HepG2 (cell line): ENCODE measurements at regions of chr7 and their contacts with region 1.

Region 1: DNA sequence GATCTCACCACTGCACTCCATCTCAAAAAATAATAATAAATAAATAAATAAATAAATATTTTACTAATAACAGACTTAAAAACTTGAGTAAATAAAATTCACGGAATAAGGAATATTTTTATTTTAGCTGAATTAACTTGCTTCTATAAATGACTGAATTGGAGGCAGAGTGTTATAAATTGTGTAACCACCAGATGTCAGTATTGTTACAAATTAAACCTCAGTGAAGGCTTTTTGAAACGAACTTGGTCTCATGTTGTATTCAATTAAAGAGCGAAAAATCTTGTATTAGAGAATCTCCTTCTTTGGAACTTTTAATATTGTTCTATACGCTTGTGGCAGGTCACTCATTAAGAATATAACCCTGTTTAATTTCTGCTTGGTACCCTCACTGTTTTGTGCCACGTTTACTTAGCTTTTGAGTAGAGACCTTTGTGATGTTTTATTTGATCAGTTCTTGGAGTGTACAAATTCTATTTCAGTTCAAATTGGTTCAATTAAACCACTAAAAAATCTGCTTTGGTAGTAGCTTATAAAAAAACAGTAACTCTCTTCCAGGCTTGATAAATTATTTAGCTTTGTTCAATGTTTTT is 45.6 kb upstream of the SCIN start:
- DNase-seq: peak; percentile 33
- ATAC-seq: no peak
- H3K4me3 ChIP-seq: no peak overlapping the region
- H3K27ac ChIP-seq: no peak overlapping the region
- H3K4me1 ChIP-seq: no peaks in the 10 kb centered on the region
- H3K27me3 ChIP-seq: no peaks in the 10 kb centered on the region
- CTCF ChIP-seq: peak; percentile 62
- EP300 ChIP-seq: no peak
- POLR2A ChIP-seq: no peak
- RAD21 ChIP-seq: no peak

Region 2: DNA sequence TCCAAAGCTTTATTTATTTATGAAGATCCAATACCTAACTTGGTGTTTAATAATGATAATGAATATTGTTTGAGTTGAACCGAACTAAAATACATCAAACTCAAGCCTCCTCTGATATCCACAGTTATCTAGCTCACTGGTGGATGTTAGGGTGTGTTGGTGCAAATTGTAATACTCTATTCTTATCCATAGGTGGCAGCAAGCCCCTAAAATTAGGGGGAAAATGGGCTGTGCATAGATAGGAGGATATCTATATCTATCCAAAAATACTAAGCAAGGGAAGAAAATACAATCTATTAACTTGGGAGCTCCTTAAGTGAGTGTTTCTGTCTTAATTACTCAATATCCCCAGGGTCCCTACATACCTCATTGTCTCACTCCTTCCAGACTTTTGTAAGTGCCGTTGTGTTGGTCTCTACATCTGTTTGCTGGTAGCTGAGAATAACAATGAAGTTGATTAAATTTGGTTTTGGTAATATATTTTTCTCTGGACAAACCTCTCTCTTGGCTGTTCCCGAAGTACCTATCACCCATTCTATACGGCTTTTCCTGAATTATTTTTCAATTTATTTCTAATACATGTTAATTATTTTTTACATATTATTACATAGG is 66.3 kb before region 1 on chr7:
- CTCF ChIA-PET with region 1: no interaction called
- POLR2A ChIA-PET with region 1: no interaction called
- in situ Hi-C with region 1: no loop called
- intact Hi-C with region 1: no loop called
- DNase-seq: peak; percentile 28
- ATAC-seq: peak; percentile 95
- H3K4me3 ChIP-seq: no peak overlapping the region
- H3K27ac ChIP-seq: no peak overlapping the region
- H3K4me1 ChIP-seq: no peaks in the 10 kb centered on the region
- H3K27me3 ChIP-seq: no peaks in the 10 kb centered on the region
- CTCF ChIP-seq: peak; percentile 70
- EP300 ChIP-seq: no peak
- POLR2A ChIP-seq: no peak
- RAD21 ChIP-seq: 0 out of 2 replicates have a peak, but pooled peaks have one; percentile 21

Region 3: DNA sequence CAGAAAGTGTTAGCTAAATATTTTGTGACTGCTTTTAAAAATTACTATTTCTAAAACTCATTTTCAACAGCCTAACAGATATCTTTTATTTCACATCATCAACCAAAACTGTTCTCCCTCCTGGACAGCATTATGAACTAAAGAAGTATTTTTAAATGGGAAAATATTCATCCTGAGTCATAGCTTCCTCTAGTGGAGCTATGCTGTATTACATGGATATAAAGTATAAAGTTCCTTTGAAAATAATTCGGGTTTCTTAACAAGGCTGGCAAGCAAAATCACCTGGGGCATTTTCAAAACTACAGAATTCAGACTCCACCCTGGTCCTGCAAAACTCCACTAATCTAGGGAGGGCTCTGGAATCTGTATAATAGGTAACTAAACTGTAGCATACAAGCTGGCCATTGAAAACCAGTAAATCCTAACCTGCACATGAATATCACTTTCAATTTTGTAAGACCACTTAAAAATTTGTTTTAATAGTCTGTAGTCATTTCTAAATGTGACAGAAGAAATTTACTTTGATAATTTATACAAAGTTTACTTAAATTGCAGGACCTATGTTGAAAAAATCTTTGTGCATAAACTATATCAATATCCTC is 99.1 kb after region 1 on chr7:
- CTCF ChIA-PET with region 1: interaction called, 18 read pairs
- POLR2A ChIA-PET with region 1: no interaction called
- in situ Hi-C with region 1: loop called (anchors 10 kb)
- intact Hi-C with region 1: loop called (anchors 1 kb)
- DNase-seq: no peak
- ATAC-seq: peak; percentile 28; the same call in 1 of the 3 replicates
- H3K4me3 ChIP-seq: no peak overlapping the region
- H3K27ac ChIP-seq: no peak overlapping the region
- H3K4me1 ChIP-seq: no peaks in the 10 kb centered on the region
- H3K27me3 ChIP-seq: no peaks in the 10 kb centered on the region
- CTCF ChIP-seq: peak; percentile 48
- EP300 ChIP-seq: no peak
- POLR2A ChIP-seq: no peak
- RAD21 ChIP-seq: no peak

Region 4: GRCh38 chr7:12715372-12716133 is 190.7 kb after region 1 on chr7:
- CTCF ChIA-PET with region 1: no interaction called
- POLR2A ChIA-PET with region 1: no interaction called
- in situ Hi-C with region 1: no loop called
- intact Hi-C with region 1: no loop called
- DNase-seq: peak; percentile 86
- ATAC-seq: peak; percentile 95
- H3K4me3 ChIP-seq: peak overlapping the region; percentile 41 to 58 (median 51)
- H3K27ac ChIP-seq: peak overlapping the region; percentile 42
- H3K4me1 ChIP-seq: peaks cover 40% of the 10 kb centered on the region
- H3K27me3 ChIP-seq: no peaks in the 10 kb centered on the region
- CTCF ChIP-seq: no peak
- EP300 ChIP-seq: 0 out of 4 replicates have a peak, but pooled peaks of 1 of the 2 experiments have one; percentile 4
- POLR2A ChIP-seq: no peak
- RAD21 ChIP-seq: no peak

Region 5: DNA sequence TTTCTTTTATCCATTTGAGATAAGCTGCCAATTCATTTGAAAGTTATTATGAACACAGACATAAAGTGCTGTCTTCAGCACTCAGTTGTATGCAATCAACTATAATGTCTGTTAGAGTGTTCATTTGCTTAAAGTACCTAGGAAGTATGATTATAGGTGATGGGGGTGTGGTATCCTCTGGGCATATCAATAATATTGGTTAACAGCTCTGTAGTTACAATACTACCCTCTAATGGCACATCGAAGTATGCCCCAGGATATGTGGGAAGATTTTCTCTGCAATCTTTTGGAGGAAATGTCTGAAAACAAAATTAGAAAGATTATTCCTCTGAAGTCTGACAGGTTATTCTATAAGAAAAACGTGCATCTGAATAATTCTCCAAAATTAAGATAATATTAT is 592.2 kb after region 1 on chr7:
- CTCF ChIA-PET with region 1: no interaction called
- POLR2A ChIA-PET with region 1: no interaction called
- in situ Hi-C with region 1: no loop called
- intact Hi-C with region 1: loop called (anchors 10 kb)
- DNase-seq: peak; percentile 35
- ATAC-seq: peak; percentile 69
- H3K4me3 ChIP-seq: no peak overlapping the region
- H3K27ac ChIP-seq: no peak overlapping the region
- H3K4me1 ChIP-seq: peaks cover 10% of the 10 kb centered on the region; the same call in 1 of the 2 replicates
- H3K27me3 ChIP-seq: no peaks in the 10 kb centered on the region
- CTCF ChIP-seq: peak; percentile 70
- EP300 ChIP-seq: no peak
- POLR2A ChIP-seq: no peak
- RAD21 ChIP-seq: peak; percentile 65; the same call in 1 of the 2 replicates